ENCODE measurements at regions of chr17 and their contacts with region 1.

Region 1: GRCh38 chr17:9222631-9223030 is 201.3 kb downstream of the NTN1 start:
- DNase-seq: no peak
- H3K4me3 ChIP-seq: no peak overlapping the region
- H3K27ac ChIP-seq: no peak overlapping the region
- H3K4me1 ChIP-seq: no peaks in the 10 kb centered on the region
- H3K27me3 ChIP-seq: no peaks in the 10 kb centered on the region
- CTCF ChIP-seq: no peak
- POLR2A ChIP-seq: no peak

Region 2: DNA sequence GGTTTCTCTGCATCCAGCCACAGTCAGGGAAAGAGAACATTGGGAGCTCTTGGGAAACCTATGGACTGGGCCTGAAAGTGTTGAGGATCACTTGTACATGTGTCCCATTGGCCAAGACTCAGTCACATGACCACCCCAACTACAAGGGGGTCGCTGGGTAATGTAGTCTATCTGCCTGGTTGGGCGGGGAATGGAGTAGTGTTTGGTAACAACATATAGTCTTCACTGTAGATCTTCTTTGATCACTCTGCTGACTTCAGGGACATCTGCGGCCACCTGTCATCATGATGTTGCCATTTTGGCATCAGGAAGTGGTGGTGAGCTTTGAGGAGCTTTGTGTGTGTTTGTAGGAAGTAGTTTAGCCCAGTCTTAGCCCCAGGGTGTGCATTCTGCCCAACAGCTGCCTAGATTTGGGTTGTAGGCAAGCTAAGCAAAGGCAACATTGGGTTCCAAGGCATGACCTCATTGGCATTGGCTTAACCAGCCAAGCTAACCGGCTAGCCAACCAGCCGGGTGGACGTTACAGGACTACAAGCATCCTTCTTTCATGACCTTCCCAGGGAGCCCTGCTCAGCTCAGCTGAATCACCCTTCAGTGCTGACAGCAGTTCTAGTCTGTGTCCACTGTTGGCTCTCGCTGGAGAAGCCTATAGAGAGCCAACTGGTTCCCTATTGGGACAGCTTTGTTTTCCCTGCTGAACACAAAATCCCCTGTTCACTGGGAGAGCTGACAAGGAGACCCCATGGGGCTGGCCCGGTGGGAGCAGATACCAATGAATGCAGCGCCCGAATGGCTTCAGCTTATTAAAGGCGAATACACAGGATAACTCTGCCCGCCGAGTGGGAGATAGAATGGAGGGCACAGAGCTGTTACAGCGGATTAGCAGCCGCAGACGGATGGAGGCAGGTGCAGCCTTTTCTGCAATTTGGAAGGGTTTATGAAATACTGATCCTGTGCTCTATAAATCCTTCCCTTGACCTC is 22.8 kb before region 1 on chr17:
- intact Hi-C with region 1: loop called (anchors 1 kb)
- DNase-seq: no peak
- H3K4me3 ChIP-seq: no peak overlapping the region
- H3K27ac ChIP-seq: no peak overlapping the region
- H3K4me1 ChIP-seq: no peaks in the 10 kb centered on the region
- H3K27me3 ChIP-seq: no peaks in the 10 kb centered on the region
- CTCF ChIP-seq: no peak
- POLR2A ChIP-seq: no peak

Measured in breast epithelium (tissue), 4 donors.